Ovary (tissue), 10 donors: ENCODE measurements at regions of chr6 and their contacts with region 1.

Region 1: GRCh38 chr6:67102743-67103142 is 1395.7 kb upstream of the EYS start:
- DNase-seq: no peak
- H3K4me3 ChIP-seq: no peak overlapping the region
- H3K27ac ChIP-seq: no peak overlapping the region
- H3K4me1 ChIP-seq: no peaks in the 10 kb centered on the region
- H3K27me3 ChIP-seq: no peaks in the 10 kb centered on the region
- CTCF ChIP-seq: no peak
- EP300 ChIP-seq: no peak
- POLR2A ChIP-seq: no peak

Region 2: DNA sequence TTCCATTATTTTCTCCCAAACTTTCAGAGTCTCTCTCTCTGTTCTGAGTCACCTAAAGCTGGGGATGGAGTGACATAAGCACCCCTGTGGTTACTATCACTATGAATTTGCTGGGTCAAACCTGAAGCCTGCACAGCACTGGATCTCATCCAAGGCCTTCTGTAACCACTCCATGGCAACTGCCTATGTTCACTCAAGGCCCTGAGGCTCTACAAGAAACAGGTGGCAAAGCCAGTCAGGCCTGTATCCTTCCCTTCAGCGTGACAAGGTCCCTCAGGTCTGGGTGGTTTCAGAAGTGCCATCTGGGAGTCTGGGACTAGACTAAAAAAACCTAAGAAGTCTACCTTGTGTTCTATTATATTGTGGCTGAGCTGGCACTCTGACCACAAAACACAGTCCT is 116.9 kb before region 1 on chr6:
- intact Hi-C with region 1: no loop called
- DNase-seq: no peak
- H3K4me3 ChIP-seq: no peak overlapping the region
- H3K27ac ChIP-seq: no peak overlapping the region
- H3K4me1 ChIP-seq: no peaks in the 10 kb centered on the region
- H3K27me3 ChIP-seq: peaks cover 2% of the 10 kb centered on the region
- CTCF ChIP-seq: no peak
- EP300 ChIP-seq: no peak
- POLR2A ChIP-seq: no peak

Region 3: GRCh38 chr6:68194846-68195478 is 1092.2 kb after region 1 on chr6:
- intact Hi-C with region 1: loop called in 1 of 4 experiments (anchors 5 kb)
- DNase-seq: no peak
- H3K4me3 ChIP-seq: no peak overlapping the region
- H3K27ac ChIP-seq: no peak overlapping the region
- H3K4me1 ChIP-seq: no peaks in the 10 kb centered on the region
- H3K27me3 ChIP-seq: no peaks in the 10 kb centered on the region
- CTCF ChIP-seq: no peak
- EP300 ChIP-seq: no peak
- POLR2A ChIP-seq: no peak